Mammary epithelial cell (primary cell): ENCODE measurements at regions of chr12 and their contacts with region 1.

Region 1: GRCh38 chr12:106345739-106346138 is 11.8 kb upstream of the POLR3B start:
- DNase-seq: peak; percentile 96
- H3K4me3 ChIP-seq: no peak overlapping the region
- H3K27ac ChIP-seq: peak overlapping the region; percentile 2
- H3K4me1 ChIP-seq: peaks cover 13% of the 10 kb centered on the region
- H3K27me3 ChIP-seq: no peaks in the 10 kb centered on the region
- CTCF ChIP-seq: peak; percentile 59 to 68

Region 2: DNA sequence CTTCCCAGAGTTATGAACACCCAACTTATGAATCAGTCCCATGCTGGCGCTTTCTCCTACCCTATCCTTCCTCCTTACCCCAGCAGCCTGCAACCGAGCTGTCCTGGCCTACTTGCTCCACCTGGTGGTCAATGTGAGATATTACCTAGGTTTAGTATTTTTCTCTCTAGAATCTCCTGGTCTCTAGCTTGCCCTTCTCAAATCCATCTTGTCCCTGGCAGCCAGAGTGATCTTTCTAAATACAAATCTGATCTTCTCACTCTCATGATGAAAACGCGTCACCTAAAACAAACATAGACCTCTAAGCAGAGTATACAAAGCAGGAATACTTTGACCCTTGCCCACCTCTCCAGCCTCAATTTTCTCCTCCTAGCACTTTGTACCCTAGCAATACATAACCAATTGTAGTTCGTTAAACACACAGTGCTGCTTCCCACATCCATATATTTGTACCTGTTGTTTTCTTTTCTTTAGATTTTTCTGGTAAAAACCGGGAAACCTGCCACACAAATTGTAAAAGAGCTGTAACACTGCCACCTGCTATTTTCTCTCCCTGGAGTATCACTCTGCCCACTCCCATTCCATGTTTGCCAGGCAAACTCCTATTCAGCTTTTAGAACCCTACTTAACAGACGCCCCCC is 63.2 kb before region 1 on chr12:
- CTCF ChIA-PET with region 1: no interaction called
- dilution Hi-C with region 1: no loop called
- in situ Hi-C with region 1: no loop called
- intact Hi-C with region 1: loop called (anchors 1 kb)
- DNase-seq: peak; percentile 63
- H3K4me3 ChIP-seq: no peak overlapping the region
- H3K27ac ChIP-seq: no peak overlapping the region
- H3K4me1 ChIP-seq: peaks cover 9% of the 10 kb centered on the region
- H3K27me3 ChIP-seq: no peaks in the 10 kb centered on the region
- CTCF ChIP-seq: peak; percentile 79 to 83

Region 3: GRCh38 chr12:106302401-106303201 is 43.1 kb before region 1 on chr12 and contains the start of gene TCP11L2:
- CTCF ChIA-PET with region 1: no interaction called
- dilution Hi-C with region 1: loop called (anchors 5 kb)
- in situ Hi-C with region 1: no loop called
- intact Hi-C with region 1: loop called (anchors 1 kb)
- DNase-seq: peak; percentile 77
- H3K4me3 ChIP-seq: peak within 1 kb of the TSS; percentile 90 to 98 (median 96)
- H3K27ac ChIP-seq: peak within 1 kb of the TSS; percentile 98
- H3K4me1 ChIP-seq: peaks cover 16% of the 10 kb centered on the region
- H3K27me3 ChIP-seq: no peaks in the 10 kb centered on the region
- CTCF ChIP-seq: no peak
- total RNA-seq, gene TCP11L2: 19.4 to 62.2 TPM

Region 4: GRCh38 chr12:106415134-106415533 is 69.4 kb after region 1 on chr12:
- CTCF ChIA-PET with region 1: no interaction called
- dilution Hi-C with region 1: no loop called
- in situ Hi-C with region 1: no loop called
- intact Hi-C with region 1: no loop called
- DNase-seq: peak; percentile 59
- H3K4me3 ChIP-seq: no peak overlapping the region
- H3K27ac ChIP-seq: no peak overlapping the region
- H3K4me1 ChIP-seq: peaks cover 32% of the 10 kb centered on the region
- H3K27me3 ChIP-seq: no peaks in the 10 kb centered on the region
- CTCF ChIP-seq: no peak